ENCODE measurements at regions of chr1 and their contacts with region 1.

Region 1: DNA sequence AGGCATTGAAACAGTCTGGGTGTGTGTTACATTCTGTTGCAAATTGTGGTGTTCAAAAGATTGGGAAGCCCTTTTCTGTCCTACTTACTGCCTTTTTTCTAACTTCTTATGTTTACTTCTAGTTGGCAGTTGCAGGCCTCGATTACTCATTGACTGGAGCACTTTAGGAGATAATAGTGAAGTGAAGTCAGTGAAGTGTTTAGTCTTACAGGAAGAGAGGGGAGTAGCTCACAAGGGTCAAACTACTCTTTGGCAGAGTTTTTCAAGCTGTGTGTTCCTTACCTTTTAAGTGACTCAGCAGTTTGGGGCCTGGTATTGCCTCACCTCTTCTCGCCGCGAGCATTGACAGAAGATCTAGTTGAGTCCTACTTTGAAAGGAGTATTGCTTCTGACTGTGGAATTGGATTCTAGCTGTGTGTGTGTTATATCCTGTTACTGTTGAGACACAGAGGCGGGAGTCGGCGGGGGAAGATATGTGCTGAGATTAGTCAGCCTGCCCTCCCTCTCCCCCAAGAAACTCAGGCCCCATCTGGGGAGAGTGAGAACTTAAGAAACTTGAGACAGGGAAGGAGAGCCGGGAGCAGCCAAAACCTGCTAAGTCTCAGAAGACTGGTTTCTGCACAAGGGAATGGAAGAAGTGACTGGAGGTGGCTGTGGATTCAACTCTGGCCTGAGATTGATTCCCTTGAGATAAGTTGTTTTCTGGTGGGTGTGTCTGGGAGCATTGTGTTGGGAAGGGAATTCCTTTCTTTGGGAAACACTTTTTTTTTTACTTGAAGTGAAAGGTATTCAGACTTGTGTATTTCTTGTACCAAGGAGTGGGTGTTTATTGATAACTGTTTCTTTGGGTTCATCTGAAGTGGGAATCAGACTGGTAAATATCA is 19.4 kb downstream of the AHCYL1 start:
- DNase-seq: peak; percentile 70 to 87 (median 76)
- ATAC-seq: peak; percentile 92
- H3K4me3 ChIP-seq: peak overlapping the region; percentile 8; the same call in 1 of the 2 replicates
- H3K27ac ChIP-seq: peak overlapping the region; percentile 87
- H3K4me1 ChIP-seq: peaks cover 14 to 37% of the 10 kb centered on the region in 2 experiments
- H3K27me3 ChIP-seq: no peaks in the 10 kb centered on the region
- CTCF ChIP-seq: no peak
- EP300 ChIP-seq: peak; percentile 28; the same call in 1 of the 2 replicates
- POLR2A ChIP-seq: no peak; the same call in 1 of the 2 replicates
- RAD21 ChIP-seq: peak in 1 of 2 experiments; percentile 29; a peak in 1 of 4 replicates

Region 2: DNA sequence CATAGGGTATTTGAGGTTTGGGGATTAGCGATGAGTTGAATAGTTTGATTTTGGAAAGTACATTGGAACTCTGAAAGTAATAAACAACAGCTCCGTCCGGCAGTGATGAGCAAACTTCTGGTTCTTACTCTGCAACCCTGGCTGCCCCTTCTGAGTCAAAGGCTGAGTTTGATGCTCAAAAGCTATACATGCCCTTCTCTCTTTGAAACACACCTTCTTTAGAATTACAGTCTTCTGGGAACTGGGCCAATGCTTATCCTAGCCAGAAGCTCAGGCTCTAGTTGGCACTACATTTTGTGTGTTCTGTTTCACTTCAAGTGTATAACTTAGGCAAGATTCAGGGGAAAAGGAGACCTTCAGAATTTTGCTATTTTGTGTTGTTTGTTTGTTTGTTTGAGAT is 10.1 kb before region 1 on chr1:
- CTCF ChIA-PET with region 1: no interaction called
- POLR2A ChIA-PET with region 1: interaction called, 10 read pairs
- in situ Hi-C with region 1: no loop called
- intact Hi-C with region 1: no loop called
- DNase-seq: no peak
- ATAC-seq: no peak
- H3K4me3 ChIP-seq: no peak overlapping the region
- H3K27ac ChIP-seq: no peak overlapping the region
- H3K4me1 ChIP-seq: peaks cover 0 to 27% of the 10 kb centered on the region in 2 experiments; a peak in 3 of 5 replicates
- H3K27me3 ChIP-seq: no peaks in the 10 kb centered on the region
- CTCF ChIP-seq: no peak
- EP300 ChIP-seq: no peak
- POLR2A ChIP-seq: no peak
- RAD21 ChIP-seq: no peak

Measured in K562 (cell line).